WTC11 (cell line): ENCODE measurements at regions of chr7 and their contacts with region 1.

Region 1: DNA sequence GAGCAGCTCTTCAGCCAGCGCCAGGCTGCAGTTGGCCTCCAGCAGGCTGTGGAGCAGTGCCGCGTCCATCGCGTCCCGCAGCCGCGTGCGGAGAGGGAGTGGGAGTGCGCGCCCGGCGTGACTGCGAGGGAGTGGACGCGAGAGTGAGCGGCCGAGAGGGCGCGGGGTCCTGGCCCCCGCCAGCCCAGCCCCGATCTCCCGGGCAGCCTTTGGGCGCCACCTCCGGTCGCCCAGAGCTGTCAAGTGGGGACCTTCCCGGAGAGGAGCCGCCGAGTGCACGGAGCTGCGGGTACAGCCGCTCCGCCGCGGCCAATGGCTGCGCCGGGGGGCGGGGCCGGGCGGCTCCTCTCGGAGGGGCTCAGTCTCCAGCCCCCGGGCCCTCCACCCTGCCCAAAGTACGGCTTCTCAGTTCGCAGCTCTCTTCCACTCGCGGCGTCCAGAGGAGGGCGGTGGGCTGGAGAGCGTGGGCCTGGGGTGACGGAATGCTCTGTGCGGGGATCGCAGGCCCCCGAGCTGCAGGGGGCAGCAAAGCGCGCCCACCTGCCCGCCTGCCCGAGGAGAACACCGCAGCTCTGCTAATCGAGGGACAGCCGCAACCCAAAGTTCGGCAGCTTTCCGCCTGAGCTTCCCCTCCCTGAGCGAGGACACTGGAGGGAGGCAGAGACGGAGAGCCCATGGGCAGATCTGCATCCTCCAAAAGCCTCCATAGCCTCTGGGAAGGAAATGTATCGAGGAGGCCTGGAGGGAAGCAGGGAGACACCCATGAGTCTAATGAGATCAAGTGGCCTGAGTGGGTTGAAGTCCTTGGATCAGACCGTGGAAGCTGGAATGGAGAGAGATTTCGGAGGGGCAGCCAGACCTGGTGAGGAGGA is at the start of gene CRHR2:
- DNase-seq: peak; percentile 63
- ATAC-seq: peak; percentile 74
- H3K4me3 Mint-ChIP-seq: peak within 1 kb of the TSS; percentile 79
- H3K27ac Mint-ChIP-seq: no peak within 1 kb of the TSS
- H3K4me1 Mint-ChIP-seq: peaks cover 46% of the 10 kb centered on the region
- H3K27me3 Mint-ChIP-seq: peaks cover 70% of the 10 kb centered on the region
- CTCF ChIP-seq: no peak
- total RNA-seq, gene CRHR2: 0.09 to 0.25 TPM (median 0.22 TPM) in 3 replicates

Region 2: GRCh38 chr7:30671793-30672465 is 10.5 kb before region 1 on chr7:
- CTCF ChIA-PET with region 1: interaction called, 14 read pairs
- POLR2A ChIA-PET with region 1: no interaction called
- DNase-seq: peak; percentile 78
- ATAC-seq: peak; percentile 90
- H3K4me3 Mint-ChIP-seq: no peak overlapping the region
- H3K27ac Mint-ChIP-seq: no peak overlapping the region
- H3K4me1 Mint-ChIP-seq: no peaks in the 10 kb centered on the region; the same call in 1 of the 2 replicates
- H3K27me3 Mint-ChIP-seq: peaks cover 8% of the 10 kb centered on the region
- CTCF ChIP-seq: no peak

Region 3: DNA sequence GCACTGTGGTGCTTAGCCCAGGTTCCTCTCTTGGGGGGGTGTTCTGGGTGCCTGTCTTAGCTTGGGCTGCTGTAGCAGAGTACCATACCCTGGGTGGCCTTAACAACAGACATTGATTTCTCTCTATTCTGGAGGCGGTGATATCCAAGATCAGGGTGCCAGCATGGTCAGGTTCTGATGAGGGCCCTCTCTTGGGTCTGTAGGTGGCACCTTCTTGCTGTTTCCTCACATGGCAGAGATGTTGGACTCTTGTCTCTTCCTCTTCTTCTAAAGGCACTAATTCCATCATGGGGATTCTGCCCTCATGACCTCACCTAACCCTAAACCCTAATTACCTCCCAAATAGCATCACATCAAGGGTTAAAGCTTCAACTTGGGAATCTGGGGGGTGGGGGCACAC is 19.8 kb after region 1 on chr7:
- CTCF ChIA-PET with region 1: interaction called, 57 read pairs
- POLR2A ChIA-PET with region 1: no interaction called
- DNase-seq: no peak
- ATAC-seq: peak; percentile 13; the same call in 1 of the 2 replicates
- H3K4me3 Mint-ChIP-seq: no peak overlapping the region
- H3K27ac Mint-ChIP-seq: no peak overlapping the region
- H3K4me1 Mint-ChIP-seq: peaks cover 22% of the 10 kb centered on the region
- H3K27me3 Mint-ChIP-seq: peaks cover 5% of the 10 kb centered on the region
- CTCF ChIP-seq: 0 out of 2 replicates have a peak, but pooled peaks have one; percentile 22

Region 4: DNA sequence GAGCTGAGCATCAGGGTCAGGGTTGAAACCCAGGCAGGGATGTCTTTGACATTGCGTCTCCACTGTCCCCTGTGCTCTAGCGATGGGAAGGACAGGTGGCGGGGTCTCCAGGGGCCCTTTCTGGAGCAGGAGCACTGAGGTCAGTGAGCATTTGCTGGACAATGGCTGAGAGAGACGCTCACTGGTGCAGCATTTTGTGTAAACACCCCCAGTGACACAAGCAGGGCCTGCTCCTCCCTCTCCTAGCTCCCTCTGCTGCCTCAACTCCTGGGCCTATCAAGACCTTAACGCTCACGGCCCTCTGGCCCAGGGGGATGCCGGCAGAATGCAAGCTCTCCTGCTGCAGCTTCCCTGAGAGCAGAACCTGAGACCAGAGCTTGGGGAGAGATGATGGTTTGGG is 52.0 kb after region 1 on chr7:
- CTCF ChIA-PET with region 1: interaction called, 36 read pairs
- POLR2A ChIA-PET with region 1: no interaction called
- DNase-seq: no peak
- ATAC-seq: peak; percentile 69
- H3K4me3 Mint-ChIP-seq: no peak overlapping the region
- H3K27ac Mint-ChIP-seq: no peak overlapping the region
- H3K4me1 Mint-ChIP-seq: peaks cover 9% of the 10 kb centered on the region
- H3K27me3 Mint-ChIP-seq: peaks cover 5% of the 10 kb centered on the region; the same call in 1 of the 2 replicates
- CTCF ChIP-seq: no peak

Region 5: GRCh38 chr7:30842542-30843451 is 160.3 kb after region 1 on chr7:
- CTCF ChIA-PET with region 1: no interaction called
- POLR2A ChIA-PET with region 1: no interaction called
- DNase-seq: no peak
- ATAC-seq: no peak
- H3K4me3 Mint-ChIP-seq: no peak overlapping the region
- H3K27ac Mint-ChIP-seq: no peak overlapping the region
- H3K4me1 Mint-ChIP-seq: peaks cover 10% of the 10 kb centered on the region; the same call in 1 of the 2 replicates
- H3K27me3 Mint-ChIP-seq: no peaks in the 10 kb centered on the region
- CTCF ChIP-seq: no peak